Mammary epithelial cell (primary cell): ENCODE measurements at regions of chr18 and their contacts with region 1.

Region 1: DNA sequence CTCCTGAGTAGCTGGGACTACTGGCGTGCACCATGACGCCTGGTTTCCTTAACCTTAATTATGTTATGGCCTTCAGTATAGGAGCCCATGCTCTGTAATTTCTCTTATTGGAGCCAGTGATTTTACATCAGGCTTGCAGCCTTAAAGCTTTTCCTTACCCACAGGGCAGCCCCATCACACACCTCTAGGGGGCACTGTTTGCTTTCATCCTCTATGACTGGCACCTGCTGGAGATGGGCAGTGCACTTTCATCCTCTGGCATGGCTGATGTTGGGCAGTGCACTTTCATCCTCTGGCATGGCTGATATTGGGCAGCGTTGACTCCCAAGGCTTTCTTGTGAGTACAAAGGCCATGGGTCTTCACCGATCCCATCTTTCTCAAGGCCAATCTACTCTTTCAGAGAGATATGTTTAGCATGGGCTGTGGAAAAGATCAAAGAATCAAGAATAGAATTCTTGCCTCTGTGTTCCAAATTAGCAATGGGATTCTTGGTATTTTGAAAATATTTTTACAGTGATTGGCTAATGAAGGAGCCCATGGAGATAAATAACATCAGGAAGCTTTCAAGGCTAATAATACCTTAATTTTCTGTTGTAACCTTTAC is 80.7 kb upstream of the MEX3C start:
- DNase-seq: peak; percentile 57
- H3K4me3 ChIP-seq: no peak overlapping the region
- H3K27ac ChIP-seq: no peak overlapping the region
- H3K4me1 ChIP-seq: no peaks in the 10 kb centered on the region
- H3K27me3 ChIP-seq: no peaks in the 10 kb centered on the region
- CTCF ChIP-seq: peak; percentile 96 to 98

Region 2: DNA sequence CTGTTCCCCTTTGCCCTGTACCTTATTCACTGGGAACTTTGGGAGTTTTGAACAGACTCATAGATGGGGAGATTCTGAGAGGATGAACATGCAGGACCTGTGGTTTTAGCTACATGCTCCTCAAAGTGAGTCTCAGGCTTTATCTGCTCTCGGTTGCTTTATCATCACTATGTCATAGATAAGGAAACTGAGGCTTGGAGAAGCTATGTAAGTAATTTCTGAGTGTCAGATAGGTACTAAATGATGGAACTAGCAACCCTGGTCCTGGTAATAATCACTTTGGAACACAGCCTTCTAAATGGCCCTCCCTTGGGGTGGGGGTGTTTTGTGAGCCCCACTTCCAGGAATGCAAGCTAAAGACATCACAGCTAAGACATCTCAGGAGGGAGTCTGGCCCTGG is 105.6 kb after region 1 on chr18:
- CTCF ChIA-PET with region 1: no interaction called
- dilution Hi-C with region 1: no loop called
- in situ Hi-C with region 1: no loop called
- intact Hi-C with region 1: loop called (anchors 1 kb)
- DNase-seq: no peak
- H3K4me3 ChIP-seq: no peak overlapping the region
- H3K27ac ChIP-seq: no peak overlapping the region
- H3K4me1 ChIP-seq: no peaks in the 10 kb centered on the region
- H3K27me3 ChIP-seq: no peaks in the 10 kb centered on the region
- CTCF ChIP-seq: no peak

Region 3: GRCh38 chr18:51506811-51507210 is 228.7 kb after region 1 on chr18:
- CTCF ChIA-PET with region 1: no interaction called
- dilution Hi-C with region 1: no loop called
- in situ Hi-C with region 1: no loop called
- intact Hi-C with region 1: no loop called
- DNase-seq: no peak
- H3K4me3 ChIP-seq: no peak overlapping the region
- H3K27ac ChIP-seq: no peak overlapping the region
- H3K4me1 ChIP-seq: no peaks in the 10 kb centered on the region
- H3K27me3 ChIP-seq: no peaks in the 10 kb centered on the region
- CTCF ChIP-seq: no peak

Region 4: GRCh38 chr18:51543658-51544155 is 265.6 kb after region 1 on chr18:
- CTCF ChIA-PET with region 1: no interaction called
- dilution Hi-C with region 1: no loop called
- in situ Hi-C with region 1: loop called (anchors 5 to 25 kb)
- intact Hi-C with region 1: no loop called
- DNase-seq: no peak
- H3K4me3 ChIP-seq: no peak overlapping the region
- H3K27ac ChIP-seq: no peak overlapping the region
- H3K4me1 ChIP-seq: no peaks in the 10 kb centered on the region
- H3K27me3 ChIP-seq: no peaks in the 10 kb centered on the region
- CTCF ChIP-seq: no peak